CD8-positive, alpha-beta memory T cell (primary cell): ENCODE measurements at regions of chr14 and their contacts with region 1.

Region 1: DNA sequence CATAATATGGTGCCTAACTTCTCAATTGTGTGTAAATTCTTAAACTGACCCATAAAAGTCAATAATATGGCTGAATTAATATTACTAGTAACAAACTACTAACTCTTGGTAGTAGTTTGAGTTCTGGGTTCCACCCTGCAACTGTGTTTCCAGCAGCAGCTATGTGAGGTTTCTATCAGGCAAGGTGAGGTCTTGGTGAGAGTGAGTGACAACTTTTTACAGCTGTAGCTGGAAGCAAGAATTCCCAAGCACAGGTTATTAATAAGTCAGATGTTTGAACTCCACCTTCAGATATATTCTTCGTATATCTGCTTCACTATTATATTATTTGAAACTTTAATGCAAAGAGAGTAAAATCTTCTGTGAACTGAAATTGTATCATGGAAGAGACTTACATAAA is 43.8 kb downstream of the MAP4K5 start:
- DNase-seq: no peak
- H3K4me3 ChIP-seq: no peak overlapping the region
- H3K4me3 Mint-ChIP-seq: no peak overlapping the region
- H3K27ac ChIP-seq: no peak overlapping the region
- H3K27ac Mint-ChIP-seq: no peak overlapping the region
- H3K4me1 ChIP-seq: no peaks in the 10 kb centered on the region
- H3K4me1 Mint-ChIP-seq: peaks cover 14 to 39% (median 23%) of the 10 kb centered on the region in 3 donors
- H3K27me3 ChIP-seq: no peaks in the 10 kb centered on the region
- H3K27me3 Mint-ChIP-seq: no peaks in the 10 kb centered on the region

Region 2: DNA sequence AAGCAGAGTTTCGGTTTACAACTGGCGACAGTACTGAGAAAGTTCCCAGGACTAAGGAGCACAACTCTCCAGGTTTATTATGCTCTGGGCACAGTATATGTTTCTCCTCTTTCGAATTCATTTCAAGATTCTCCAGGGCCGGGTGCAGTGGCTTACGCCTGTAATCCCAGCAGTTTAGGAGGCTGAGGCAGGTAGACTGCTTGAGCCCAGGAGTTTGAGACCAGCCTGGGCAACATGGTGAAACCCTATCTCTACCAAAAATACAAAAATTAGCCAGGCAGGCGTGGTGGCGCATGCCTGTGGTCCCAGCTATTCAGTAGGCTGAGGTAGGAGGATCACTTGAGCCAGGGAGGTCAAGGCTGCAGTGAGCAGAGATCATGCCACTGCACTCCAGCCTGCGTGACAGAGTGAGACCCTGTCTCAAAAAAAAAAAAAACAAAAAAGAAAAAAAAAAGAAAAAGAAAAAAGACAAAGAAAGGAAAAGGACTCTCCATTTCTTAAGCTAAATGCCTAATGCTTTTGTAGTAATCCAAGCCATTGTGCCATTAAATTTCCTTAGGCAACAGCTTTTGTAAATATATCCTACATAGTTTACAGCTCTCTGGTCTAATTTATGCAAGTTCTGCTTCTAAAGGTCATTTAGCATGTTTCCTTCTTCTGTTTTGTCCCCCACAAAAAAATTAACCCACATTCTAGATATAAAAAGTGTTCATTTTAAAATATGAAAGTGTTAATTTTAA is 106.2 kb after region 1 on chr14:
- CTCF ChIA-PET with region 1: no interaction called
- POLR2A ChIA-PET with region 1: interaction called, 10 read pairs
- DNase-seq: no peak
- H3K4me3 ChIP-seq: no peak overlapping the region
- H3K4me3 Mint-ChIP-seq: no peak overlapping the region
- H3K27ac ChIP-seq: no peak overlapping the region
- H3K27ac Mint-ChIP-seq: no peak overlapping the region
- H3K4me1 ChIP-seq: no peaks in the 10 kb centered on the region
- H3K4me1 Mint-ChIP-seq: no peaks in the 10 kb centered on the region
- H3K27me3 ChIP-seq: no peaks in the 10 kb centered on the region
- H3K27me3 Mint-ChIP-seq: peaks cover 0 to 7% of the 10 kb centered on the region in 2 donors

Region 3: DNA sequence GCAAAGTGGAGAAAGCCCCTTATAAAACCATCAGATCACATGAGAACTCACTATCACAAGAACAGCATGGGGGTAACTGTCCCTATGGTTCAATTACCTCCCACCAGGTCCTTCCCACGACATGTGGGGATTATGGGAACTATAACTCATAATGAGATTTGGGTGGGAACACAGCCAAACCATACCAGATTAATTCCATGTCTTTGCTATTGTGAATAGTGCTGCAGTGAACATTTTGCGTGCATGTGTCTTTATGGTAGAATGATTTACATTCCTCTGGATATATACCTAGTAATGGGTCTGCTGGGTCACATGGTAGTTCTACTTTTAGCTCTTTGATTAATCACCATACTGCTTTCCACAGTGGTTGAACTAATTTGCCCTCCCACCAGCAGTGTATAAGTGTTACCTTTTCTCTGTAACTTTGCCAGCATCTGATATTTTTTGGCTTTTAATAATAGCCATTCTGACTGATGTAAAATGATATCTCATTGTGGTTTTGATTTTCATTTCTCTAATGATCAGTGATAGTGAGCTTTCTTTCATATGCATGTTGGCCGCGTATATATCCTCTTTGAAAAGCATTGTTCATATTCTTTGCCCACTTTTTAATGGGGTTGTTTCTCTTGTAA is 209.3 kb after region 1 on chr14:
- CTCF ChIA-PET with region 1: no interaction called
- POLR2A ChIA-PET with region 1: no interaction called
- DNase-seq: no peak
- H3K4me3 ChIP-seq: no peak overlapping the region
- H3K4me3 Mint-ChIP-seq: no peak overlapping the region
- H3K27ac ChIP-seq: no peak overlapping the region
- H3K27ac Mint-ChIP-seq: no peak overlapping the region
- H3K4me1 ChIP-seq: no peaks in the 10 kb centered on the region
- H3K4me1 Mint-ChIP-seq: no peaks in the 10 kb centered on the region
- H3K27me3 ChIP-seq: peaks cover 13% of the 10 kb centered on the region
- H3K27me3 Mint-ChIP-seq: peaks cover 20 to 43% of the 10 kb centered on the region in 2 donors